Naive thymus-derived CD4-positive, alpha-beta T cell (primary cell): ENCODE measurements at regions of chr16 and their contacts with region 1.

Region 1: GRCh38 chr16:4183237-4184036 is 58.4 kb downstream of the SRL start:
- DNase-seq: peak; percentile 57 to 99 (median 67)
- ATAC-seq: peak; percentile 89
- H3K4me3 ChIP-seq: peak overlapping the region; percentile 65
- H3K4me3 Mint-ChIP-seq: peak overlapping the region; percentile 61 to 95 (median 80)
- H3K27ac ChIP-seq: peak overlapping the region; percentile 62
- H3K27ac Mint-ChIP-seq: peak overlapping the region in 2 of 9 donors; percentile 53 to 71
- H3K4me1 ChIP-seq: no peaks in the 10 kb centered on the region
- H3K4me1 Mint-ChIP-seq: peaks cover 5 to 12% (median 6%) of the 10 kb centered on the region in 7 donors
- H3K27me3 ChIP-seq: no peaks in the 10 kb centered on the region
- H3K27me3 Mint-ChIP-seq: peaks cover 0 to 18% (median 0%) of the 10 kb centered on the region in 5 donors

Region 2: GRCh38 chr16:4116337-4117249 is 66.8 kb before region 1 on chr16 and contains the start of gene ADCY9:
- CTCF ChIA-PET with region 1: no interaction called
- POLR2A ChIA-PET with region 1: no interaction called
- intact Hi-C with region 1: loop called (anchors 2 to 5 kb)
- DNase-seq: peak; percentile 67 to 89 (median 78)
- ATAC-seq: peak; percentile 95
- H3K4me3 ChIP-seq: peak within 1 kb of the TSS; percentile 65
- H3K4me3 Mint-ChIP-seq: peak within 1 kb of the TSS; percentile 79 to 94 (median 88)
- H3K27ac ChIP-seq: peak within 1 kb of the TSS; percentile 14
- H3K27ac Mint-ChIP-seq: peak within 1 kb of the TSS in 8 of 9 donors; percentile 25 to 82 (median 70)
- H3K4me1 ChIP-seq: peaks cover 13 to 19% of the 10 kb centered on the region in 2 donors
- H3K4me1 Mint-ChIP-seq: peaks cover 31 to 41% (median 38%) of the 10 kb centered on the region in 7 donors
- H3K27me3 ChIP-seq: no peaks in the 10 kb centered on the region
- H3K27me3 Mint-ChIP-seq: peaks cover 0 to 26% (median 0%) of the 10 kb centered on the region in 5 donors
- total RNA-seq, gene ADCY9: 3.9 to 14.3 (median 5.6) TPM

Region 3: DNA sequence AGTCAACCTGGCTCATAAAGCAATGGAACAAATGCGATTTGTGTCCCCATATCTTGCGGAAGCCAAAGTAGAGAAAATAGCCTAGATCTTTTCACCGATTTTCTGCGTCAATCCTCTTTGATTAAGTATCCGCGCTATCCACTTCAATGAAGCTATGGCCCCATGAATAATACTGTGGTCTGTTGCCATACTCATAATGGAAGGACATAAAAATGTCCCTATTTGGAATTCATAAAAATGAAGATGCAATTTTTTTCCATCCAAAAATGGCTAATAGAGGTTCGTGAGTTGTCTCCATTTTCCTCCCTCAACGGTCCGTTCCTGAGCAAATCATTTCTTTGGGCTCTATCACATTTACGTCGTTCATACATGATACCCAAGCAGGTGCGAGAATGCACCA is 41.8 kb before region 1 on chr16:
- CTCF ChIA-PET with region 1: no interaction called
- POLR2A ChIA-PET with region 1: no interaction called
- intact Hi-C with region 1: loop called in 1 of 2 experiments (anchors 1 kb)
- DNase-seq: no peak
- ATAC-seq: no peak
- H3K4me3 ChIP-seq: no peak overlapping the region
- H3K4me3 Mint-ChIP-seq: no peak overlapping the region
- H3K27ac ChIP-seq: no peak overlapping the region
- H3K27ac Mint-ChIP-seq: peak overlapping the region in 1 of 9 donors; percentile 38
- H3K4me1 ChIP-seq: peaks cover 5 to 8% of the 10 kb centered on the region in 2 donors
- H3K4me1 Mint-ChIP-seq: peaks cover 0 to 42% (median 8%) of the 10 kb centered on the region in 7 donors
- H3K27me3 ChIP-seq: no peaks in the 10 kb centered on the region
- H3K27me3 Mint-ChIP-seq: peaks cover 0 to 6% (median 0%) of the 10 kb centered on the region in 5 donors